HEK293 (cell line): ENCODE measurements at regions of chr17 and their contacts with region 1.

Region 1: DNA sequence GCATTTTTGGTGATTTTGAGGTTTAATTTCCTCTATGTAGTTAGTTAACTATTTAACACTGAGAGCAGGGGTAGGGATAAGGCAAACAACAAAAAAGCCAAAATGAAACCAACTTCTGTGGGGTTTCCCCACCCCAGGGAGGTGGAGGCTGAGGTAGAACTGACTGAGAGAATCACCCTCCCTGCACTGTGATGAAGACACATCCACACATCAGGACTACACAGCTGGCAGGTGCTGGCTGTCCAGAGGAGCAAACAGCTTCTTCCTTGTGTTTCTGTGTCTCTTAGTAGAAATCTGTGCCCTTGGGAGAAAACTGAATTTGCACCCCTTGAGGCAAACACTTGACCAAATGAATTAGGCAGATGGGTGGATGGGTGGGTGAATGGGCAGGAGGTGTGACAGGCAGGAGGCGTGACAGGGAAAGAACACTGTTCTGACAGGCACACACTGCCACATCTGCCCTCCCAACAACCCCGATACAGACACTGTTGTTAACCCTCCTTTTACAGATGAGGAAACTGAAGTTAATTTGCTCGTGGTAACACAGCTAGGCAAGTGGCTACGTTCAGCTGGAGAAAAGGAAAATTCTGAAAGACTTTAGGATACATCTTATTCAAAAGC is 62.9 kb upstream of the AMZ2 start:
- H3K4me3 ChIP-seq: no peak overlapping the region
- H3K27ac ChIP-seq: no peak overlapping the region
- H3K4me1 ChIP-seq: no peaks in the 10 kb centered on the region
- CTCF ChIP-seq: no peak

Region 2: GRCh38 chr17:68205251-68205807 is 20.4 kb after region 1 on chr17:
- CTCF ChIA-PET with region 1: interaction called, 17 read pairs
- POLR2A ChIA-PET with region 1: interaction called, 4 read pairs
- H3K4me3 ChIP-seq: peak overlapping the region; percentile 90
- H3K27ac ChIP-seq: peak overlapping the region; percentile 79; the same call in 1 of the 2 replicates
- H3K4me1 ChIP-seq: peaks cover 5% of the 10 kb centered on the region; the same call in 1 of the 2 replicates
- CTCF ChIP-seq: peak; percentile 79